ENCODE measurements at regions of chr9 and their contacts with region 1.

Region 1: GRCh38 chr9:37079370-37080164 is 40.8 kb upstream of the ZCCHC7 start:
- DNase-seq: peak; percentile 90 to 92
- ATAC-seq: peak; percentile 99 to 100 (median 99)
- H3K4me3 ChIP-seq: peak overlapping the region; percentile 69 to 95 (median 83)
- H3K27ac ChIP-seq: peak overlapping the region; percentile 63 to 93 (median 88)
- H3K4me1 ChIP-seq: peaks cover 0 to 45% (median 21%) of the 10 kb centered on the region in 9 donors
- H3K27me3 ChIP-seq: peaks cover 0 to 14% (median 0%) of the 10 kb centered on the region in 7 donors
- CTCF ChIP-seq: no peak

Region 2: DNA sequence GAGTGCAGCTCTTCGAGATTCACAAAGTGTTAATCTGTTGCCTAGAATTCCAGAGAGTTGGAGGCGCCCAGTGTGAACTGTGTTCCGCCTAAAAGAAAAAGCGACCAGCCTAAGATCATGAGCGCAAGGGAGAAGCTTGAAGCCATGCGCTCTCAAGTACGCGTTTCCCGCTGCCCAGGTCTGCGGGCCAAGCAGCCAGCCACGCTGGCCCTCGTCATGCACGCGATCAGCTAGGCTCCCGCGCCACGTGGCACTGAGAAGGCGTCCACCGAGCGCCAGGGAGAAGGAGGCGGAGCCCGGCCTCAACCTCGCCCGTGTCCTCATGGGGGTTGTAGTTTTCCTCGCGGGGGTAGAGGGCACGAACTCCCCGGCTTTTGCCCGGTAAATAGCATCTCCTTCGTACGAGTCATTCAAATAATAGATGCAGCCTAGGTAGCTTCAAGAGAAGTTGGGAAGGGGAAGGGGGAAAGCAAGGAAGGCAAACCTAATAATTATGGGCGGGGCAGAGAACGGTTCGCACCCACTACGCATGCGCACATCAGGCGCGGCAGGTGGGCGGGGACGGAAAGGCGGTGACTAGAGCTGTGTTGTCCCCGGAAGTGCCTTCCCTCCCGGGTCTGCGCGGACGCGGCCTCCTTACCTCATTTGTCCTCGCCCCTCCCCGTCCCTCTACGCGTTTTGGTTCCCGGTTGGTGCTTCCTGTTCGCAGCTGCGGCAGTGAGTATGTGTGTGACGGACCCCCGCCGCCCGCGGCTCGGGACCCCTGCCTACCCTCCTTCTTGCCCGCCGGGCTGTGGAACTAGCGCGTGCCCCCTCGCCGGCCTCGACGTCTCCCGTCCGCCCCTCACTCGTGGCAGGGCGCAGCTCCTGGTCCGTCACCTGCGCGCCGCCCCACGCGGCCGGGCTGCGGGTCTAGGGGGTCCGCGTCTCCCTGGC is 40.6 kb after region 1 on chr9 and contains the start of gene ZCCHC7:
- intact Hi-C with region 1: loop called in 4 of 10 experiments (anchors 1 to 10 kb)
- DNase-seq: peak; percentile 96 to 97
- ATAC-seq: peak; percentile 99 to 100 (median 100)
- H3K4me3 ChIP-seq: peak within 1 kb of the TSS; percentile 77 to 99 (median 90)
- H3K27ac ChIP-seq: peak within 1 kb of the TSS; percentile 49 to 97 (median 93)
- H3K4me1 ChIP-seq: peaks cover 0 to 25% (median 20%) of the 10 kb centered on the region in 9 donors
- H3K27me3 ChIP-seq: no peaks in the 10 kb centered on the region
- CTCF ChIP-seq: no peak
- total RNA-seq, gene ZCCHC7: 7.8 to 11.9 (median 9.8) TPM

Measured in heart right ventricle (tissue), 16 donors.